ENCODE measurements at regions of chr13 and their contacts with region 1.

Region 1: DNA sequence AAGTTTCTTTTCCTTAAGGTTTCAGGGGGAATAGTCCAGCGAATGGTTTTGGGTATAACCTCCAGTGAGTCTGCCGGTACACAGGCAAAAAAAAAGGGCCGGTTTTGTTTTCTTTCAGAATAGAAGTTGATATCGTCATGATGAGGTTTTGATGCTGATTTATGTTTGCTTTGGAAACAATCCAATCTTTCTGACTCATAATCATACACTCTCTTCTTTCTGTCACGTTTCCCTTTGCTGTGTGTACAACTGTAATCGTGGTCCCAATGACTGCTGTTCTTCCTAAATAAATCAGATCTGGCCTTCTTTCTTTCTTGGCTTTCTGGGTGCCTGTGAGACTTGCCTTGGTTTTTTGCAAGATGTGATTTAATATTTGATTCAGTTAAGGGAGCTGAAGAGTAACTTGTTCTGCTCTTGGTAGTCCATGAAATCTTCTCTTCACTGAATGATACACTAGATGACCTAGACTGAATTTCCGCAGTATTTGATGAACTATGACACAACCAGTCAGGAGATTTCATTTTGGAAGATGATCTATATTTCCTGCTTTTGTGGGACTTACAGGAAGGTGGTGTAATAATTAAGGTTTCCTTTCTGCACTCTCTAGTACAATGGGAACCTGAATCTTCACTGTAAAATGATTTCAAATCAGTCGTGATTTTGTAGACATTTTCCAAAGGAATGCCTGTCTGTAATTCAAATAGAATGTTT is 34.9 kb upstream of the METTL21C start:
- DNase-seq: no peak
- H3K4me3 ChIP-seq: no peak overlapping the region
- H3K27ac ChIP-seq: no peak overlapping the region
- H3K4me1 ChIP-seq: no peaks in the 10 kb centered on the region
- H3K27me3 ChIP-seq: no peaks in the 10 kb centered on the region
- CTCF ChIP-seq: no peak

Region 2: DNA sequence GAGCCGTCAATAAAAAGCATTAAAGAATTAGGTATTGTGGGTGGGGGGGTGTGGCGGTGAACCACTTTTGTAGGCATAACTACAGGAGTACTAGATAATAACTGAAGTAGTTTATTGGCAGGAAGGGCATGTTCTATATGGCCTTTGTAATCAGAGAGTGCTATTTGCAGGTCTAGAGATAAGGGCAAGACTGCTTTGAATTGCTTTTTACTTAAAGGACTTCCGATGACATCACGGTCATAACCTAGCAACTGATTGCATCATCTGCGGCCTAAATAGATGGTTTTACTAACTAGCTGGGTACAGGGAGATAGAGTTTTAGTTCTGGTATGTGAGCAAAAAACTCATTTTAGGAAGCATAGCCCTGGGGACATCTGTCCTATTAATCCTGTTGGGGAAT is 59.6 kb before region 1 on chr13:
- intact Hi-C with region 1: loop called (anchors 2 kb)
- DNase-seq: no peak
- H3K4me3 ChIP-seq: no peak overlapping the region
- H3K27ac ChIP-seq: no peak overlapping the region
- H3K4me1 ChIP-seq: no peaks in the 10 kb centered on the region
- H3K27me3 ChIP-seq: no peaks in the 10 kb centered on the region
- CTCF ChIP-seq: no peak

Region 3: DNA sequence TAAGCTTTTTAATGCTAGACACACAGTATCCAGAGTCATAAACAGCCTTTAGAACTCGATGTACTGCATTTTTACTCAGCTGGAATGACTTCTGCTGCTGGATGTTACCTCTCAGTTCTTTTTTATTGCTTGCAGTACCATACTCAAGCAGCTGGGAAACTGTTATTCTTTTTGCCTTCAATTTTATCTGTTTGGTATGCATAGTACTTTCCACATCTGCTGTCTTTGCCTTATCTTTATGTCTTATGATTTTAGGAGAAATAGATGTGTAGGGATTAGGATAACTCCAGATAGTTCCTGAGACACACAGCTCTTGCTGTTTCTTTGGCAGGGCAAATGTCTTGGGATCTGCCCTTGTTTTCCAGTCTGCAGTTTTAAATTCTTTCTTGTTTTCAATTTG is 12.4 kb after region 1 on chr13:
- intact Hi-C with region 1: no loop called
- DNase-seq: no peak
- H3K4me3 ChIP-seq: no peak overlapping the region
- H3K27ac ChIP-seq: no peak overlapping the region
- H3K4me1 ChIP-seq: no peaks in the 10 kb centered on the region
- H3K27me3 ChIP-seq: no peaks in the 10 kb centered on the region
- CTCF ChIP-seq: no peak

Region 4: DNA sequence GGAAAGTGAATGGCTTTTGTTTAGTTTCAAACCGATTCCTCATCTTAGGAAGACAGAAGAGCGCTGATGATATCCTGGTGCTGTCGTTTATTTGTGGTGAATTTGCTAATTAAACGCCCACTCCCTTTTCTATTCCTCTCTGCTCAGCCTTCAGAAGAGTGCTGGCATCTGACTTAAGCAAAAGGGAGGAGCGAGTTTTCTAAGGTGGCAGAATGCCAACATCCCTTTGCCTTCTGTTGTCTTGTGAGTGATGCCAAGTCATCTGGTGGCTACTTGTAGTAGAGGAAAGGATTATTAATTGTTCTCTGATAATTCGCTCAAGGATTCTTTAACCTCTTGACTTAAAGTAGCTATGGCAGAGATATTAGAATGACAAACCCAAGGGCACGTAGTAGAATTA is 184.2 kb after region 1 on chr13:
- intact Hi-C with region 1: no loop called
- DNase-seq: no peak
- H3K4me3 ChIP-seq: no peak overlapping the region
- H3K27ac ChIP-seq: no peak overlapping the region
- H3K4me1 ChIP-seq: no peaks in the 10 kb centered on the region
- H3K27me3 ChIP-seq: no peaks in the 10 kb centered on the region
- CTCF ChIP-seq: no peak